Sciatic nerve (tissue), 2 donors: ENCODE measurements at regions of chr13 and their contacts with region 1.

Region 1: GRCh38 chr13:104310861-104311260 is 1244.6 kb upstream of the SLC10A2 start:
- DNase-seq: no peak
- ATAC-seq: no peak

Region 2: GRCh38 chr13:103772576-103772975 is 538.3 kb before region 1 on chr13:
- intact Hi-C with region 1: no loop called
- DNase-seq: no peak
- ATAC-seq: no peak

Region 3: GRCh38 chr13:104246955-104247354 is 63.9 kb before region 1 on chr13:
- intact Hi-C with region 1: loop called (anchors 2 kb)
- DNase-seq: no peak
- ATAC-seq: no peak